SK-N-SH (cell line): ENCODE measurements at regions of chr21 and their contacts with region 1.

Region 1: DNA sequence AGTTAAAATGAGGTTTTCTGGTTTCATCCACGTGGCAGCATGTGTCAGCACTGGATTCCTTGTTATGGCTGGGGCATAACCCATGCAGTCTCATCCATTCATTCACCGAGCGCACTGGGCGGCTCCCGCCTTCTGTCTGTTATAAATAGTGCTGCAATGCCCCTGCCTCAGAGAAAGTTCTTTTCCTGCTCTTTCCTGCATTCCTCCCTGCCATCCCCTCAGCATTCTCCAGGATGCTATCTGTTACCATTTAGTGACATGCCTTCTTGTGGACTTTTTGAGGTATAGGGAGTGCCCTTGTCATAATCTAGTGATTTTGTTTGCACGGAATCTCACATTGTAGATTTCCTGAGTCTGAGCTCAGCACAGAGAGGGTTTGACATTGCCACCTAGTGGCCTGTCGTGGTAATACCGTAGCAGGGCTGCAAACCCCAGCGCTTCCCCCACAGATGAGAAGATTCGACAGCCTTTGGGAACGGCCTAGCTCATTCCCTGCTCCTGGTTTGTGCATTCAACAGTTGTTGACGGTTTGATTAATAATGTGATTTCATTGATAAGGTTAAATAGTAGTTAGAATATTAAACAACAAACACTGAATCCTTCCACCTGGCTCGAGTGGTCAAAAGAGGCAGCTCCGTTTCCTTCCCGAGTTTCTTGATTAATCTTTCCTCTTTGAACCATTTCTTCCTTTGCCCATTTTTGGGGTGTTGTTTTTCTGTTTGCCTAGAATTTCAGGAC is 46.3 kb downstream of the UMODL1 start:
- DNase-seq: peak; percentile 83
- H3K4me3 ChIP-seq: peak overlapping the region; percentile 15 to 53; a peak in 3 of 4 replicates
- H3K27ac ChIP-seq: no peak overlapping the region
- H3K4me1 ChIP-seq: peaks cover 0 to 29% of the 10 kb centered on the region in 2 experiments; a peak in 1 of 4 replicates
- H3K27me3 ChIP-seq: peaks cover 19% of the 10 kb centered on the region
- CTCF ChIP-seq: peak; percentile 91
- EP300 ChIP-seq: no peak; a peak in 1 of 4 replicates
- RAD21 ChIP-seq: peak; percentile 88

Region 2: GRCh38 chr21:41879190-41879998 is 238.0 kb before region 1 on chr21 and contains the start of gene PRDM15:
- CTCF ChIA-PET with region 1: interaction called, 10 read pairs
- POLR2A ChIA-PET with region 1: no interaction called
- DNase-seq: peak; percentile 94
- H3K4me3 ChIP-seq: peak within 1 kb of the TSS; percentile 88 to 93
- H3K27ac ChIP-seq: peak within 1 kb of the TSS; percentile 67 to 87
- H3K4me1 ChIP-seq: peaks cover 0 to 13% of the 10 kb centered on the region in 2 experiments; a peak in 3 of 4 replicates
- H3K27me3 ChIP-seq: no peaks in the 10 kb centered on the region
- CTCF ChIP-seq: no peak
- EP300 ChIP-seq: no peak
- RAD21 ChIP-seq: no peak
- polyA plus RNA-seq, gene PRDM15: 6.6 and 7.0 TPM in 2 replicates

Region 3: DNA sequence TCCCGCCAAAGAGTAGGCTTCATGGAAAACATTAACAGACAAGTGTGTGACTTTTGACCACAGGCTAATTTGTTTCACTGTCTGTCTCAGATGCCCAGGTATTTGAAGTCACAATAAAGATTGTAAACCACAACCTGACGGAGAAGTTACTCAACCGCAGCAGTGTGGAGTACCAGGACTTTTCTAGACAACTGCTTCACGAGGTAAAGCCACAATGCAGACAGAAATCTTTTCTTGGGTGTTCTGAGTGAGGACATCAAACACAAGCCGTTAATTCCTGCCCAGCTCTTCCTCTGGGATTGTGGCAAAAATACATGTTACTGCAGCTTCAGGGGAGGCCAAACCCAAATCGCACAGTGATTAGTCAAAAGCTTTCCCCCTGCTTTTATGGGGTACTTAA is 15.3 kb before region 1 on chr21:
- CTCF ChIA-PET with region 1: interaction called, 46 read pairs
- POLR2A ChIA-PET with region 1: interaction called, 3 read pairs
- DNase-seq: no peak
- H3K4me3 ChIP-seq: no peak overlapping the region
- H3K27ac ChIP-seq: no peak overlapping the region
- H3K4me1 ChIP-seq: peaks cover 0 to 8% of the 10 kb centered on the region in 2 experiments; a peak in 2 of 4 replicates
- H3K27me3 ChIP-seq: no peaks in the 10 kb centered on the region
- CTCF ChIP-seq: no peak
- EP300 ChIP-seq: no peak
- RAD21 ChIP-seq: no peak

Region 4: DNA sequence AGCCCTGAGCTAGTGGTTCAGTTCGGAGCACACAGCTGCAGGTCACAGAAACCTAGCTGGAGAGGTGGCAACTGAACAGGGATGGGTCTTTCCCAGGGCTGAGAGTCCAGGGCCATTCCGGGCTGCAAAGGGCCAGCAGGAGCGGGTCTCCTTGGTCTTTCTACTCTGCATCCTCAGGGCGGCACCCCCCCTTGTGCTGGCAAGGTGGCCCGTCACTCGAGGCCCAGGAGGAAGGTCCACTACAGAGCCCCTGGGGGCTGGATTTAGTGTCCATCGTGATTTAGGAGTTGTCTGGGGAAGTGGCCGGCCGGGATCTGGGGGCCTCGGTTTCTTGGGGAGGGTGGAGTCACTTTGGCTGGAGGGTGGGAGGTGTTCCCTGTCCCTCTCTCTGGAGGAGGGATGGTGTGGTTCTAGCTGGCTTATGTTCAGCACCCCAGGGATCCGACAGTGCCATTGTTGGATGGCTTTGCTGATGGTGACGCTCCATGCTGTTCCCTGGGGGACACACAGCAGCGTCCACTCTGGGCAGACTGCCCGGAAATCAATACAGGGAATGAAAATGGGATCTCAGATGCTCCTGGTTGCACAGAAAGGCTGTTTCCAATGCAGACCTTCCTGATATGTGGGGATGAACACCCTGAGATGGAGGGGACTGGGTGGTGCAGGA is 18.1 kb after region 1 on chr21:
- CTCF ChIA-PET with region 1: interaction called, 17 read pairs
- POLR2A ChIA-PET with region 1: no interaction called
- DNase-seq: no peak
- H3K4me3 ChIP-seq: no peak overlapping the region
- H3K27ac ChIP-seq: no peak overlapping the region
- H3K4me1 ChIP-seq: no peaks in the 10 kb centered on the region
- H3K27me3 ChIP-seq: no peaks in the 10 kb centered on the region; the same call in 1 of the 2 replicates
- CTCF ChIP-seq: no peak
- EP300 ChIP-seq: no peak
- RAD21 ChIP-seq: no peak

Region 5: GRCh38 chr21:42350896-42351543 is 233.6 kb after region 1 on chr21 and contains the start of gene TFF2:
- CTCF ChIA-PET with region 1: no interaction called
- POLR2A ChIA-PET with region 1: no interaction called
- DNase-seq: no peak
- H3K4me3 ChIP-seq: no peak within 1 kb of the TSS
- H3K27ac ChIP-seq: no peak within 1 kb of the TSS
- H3K4me1 ChIP-seq: no peaks in the 10 kb centered on the region
- H3K27me3 ChIP-seq: no peaks in the 10 kb centered on the region
- CTCF ChIP-seq: no peak
- EP300 ChIP-seq: no peak
- RAD21 ChIP-seq: no peak
- polyA plus RNA-seq, gene TFF2: not detected in 2 replicates